K562 (cell line): ENCODE measurements at regions of chr18 and their contacts with region 1.

Region 1: DNA sequence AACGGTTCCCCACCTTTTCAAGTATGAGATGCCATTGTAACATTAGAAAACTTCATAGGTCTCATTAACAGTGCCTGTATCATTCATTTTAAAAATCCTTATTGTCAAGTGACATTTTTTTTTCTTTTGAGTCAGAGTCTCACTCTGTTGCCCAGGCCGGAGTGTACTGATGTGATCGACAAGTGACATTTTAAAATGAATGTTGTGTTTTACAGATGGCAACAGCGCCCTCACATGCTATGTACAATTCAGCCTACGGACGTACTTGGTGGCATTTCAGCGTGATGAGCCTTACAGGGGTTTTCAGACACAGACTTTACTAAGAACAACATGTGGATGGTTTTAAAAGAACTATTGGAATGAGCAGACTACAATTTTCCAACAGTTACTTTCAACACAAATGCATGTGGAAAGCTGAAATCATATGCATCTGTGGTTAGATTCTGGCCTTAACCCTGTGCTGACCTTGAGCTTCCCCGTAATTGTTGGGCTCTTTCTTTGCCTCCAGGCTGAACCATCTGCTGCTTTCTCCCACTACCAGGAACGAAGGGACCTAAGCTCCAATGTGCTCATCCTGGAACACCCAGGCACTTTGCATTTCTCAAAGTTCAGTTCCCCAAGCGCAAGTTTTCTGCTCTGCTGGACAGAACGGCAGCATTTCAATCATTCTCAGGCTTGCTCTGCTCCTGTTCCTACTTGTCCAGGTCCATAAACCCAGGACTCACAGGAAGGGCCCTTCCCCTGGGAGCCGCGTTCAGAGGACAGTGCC is 119.9 kb upstream of the NDUFV2 start:
- DNase-seq: peak in 3 of 4 experiments; percentile 40 to 85 (median 59)
- ATAC-seq: peak; percentile 94
- H3K4me3 ChIP-seq: no peak overlapping the region
- H3K27ac ChIP-seq: no peak overlapping the region
- H3K4me1 ChIP-seq: peaks cover 3 to 12% of the 10 kb centered on the region in 2 experiments; a peak in 3 of 5 replicates
- H3K27me3 ChIP-seq: no peaks in the 10 kb centered on the region
- CTCF ChIP-seq: peak; percentile 74 to 90 (median 81)
- EP300 ChIP-seq: peak; percentile 45; the same call in 1 of the 2 replicates
- POLR2A ChIP-seq: no peak
- RAD21 ChIP-seq: peak; percentile 93 to 98

Region 2: GRCh38 chr18:8922669-8923068 is 59.9 kb before region 1 on chr18:
- CTCF ChIA-PET with region 1: no interaction called
- POLR2A ChIA-PET with region 1: no interaction called
- in situ Hi-C with region 1: no loop called
- intact Hi-C with region 1: loop called (anchors 5 kb)
- DNase-seq: no peak
- ATAC-seq: no peak
- H3K4me3 ChIP-seq: no peak overlapping the region
- H3K27ac ChIP-seq: no peak overlapping the region
- H3K4me1 ChIP-seq: peaks cover 0 to 18% of the 10 kb centered on the region in 2 experiments; a peak in 3 of 5 replicates
- H3K27me3 ChIP-seq: no peaks in the 10 kb centered on the region
- CTCF ChIP-seq: no peak
- EP300 ChIP-seq: no peak
- POLR2A ChIP-seq: no peak
- RAD21 ChIP-seq: no peak